ENCODE measurements at regions of chrX and their contacts with region 1.

Region 1: GRCh38 chrX:53317365-53318069 is 36.1 kb upstream of the IQSEC2 start:
- DNase-seq: no peak
- H3K4me3 ChIP-seq: no peak overlapping the region
- CTCF ChIP-seq: peak; percentile 81

Region 2: DNA sequence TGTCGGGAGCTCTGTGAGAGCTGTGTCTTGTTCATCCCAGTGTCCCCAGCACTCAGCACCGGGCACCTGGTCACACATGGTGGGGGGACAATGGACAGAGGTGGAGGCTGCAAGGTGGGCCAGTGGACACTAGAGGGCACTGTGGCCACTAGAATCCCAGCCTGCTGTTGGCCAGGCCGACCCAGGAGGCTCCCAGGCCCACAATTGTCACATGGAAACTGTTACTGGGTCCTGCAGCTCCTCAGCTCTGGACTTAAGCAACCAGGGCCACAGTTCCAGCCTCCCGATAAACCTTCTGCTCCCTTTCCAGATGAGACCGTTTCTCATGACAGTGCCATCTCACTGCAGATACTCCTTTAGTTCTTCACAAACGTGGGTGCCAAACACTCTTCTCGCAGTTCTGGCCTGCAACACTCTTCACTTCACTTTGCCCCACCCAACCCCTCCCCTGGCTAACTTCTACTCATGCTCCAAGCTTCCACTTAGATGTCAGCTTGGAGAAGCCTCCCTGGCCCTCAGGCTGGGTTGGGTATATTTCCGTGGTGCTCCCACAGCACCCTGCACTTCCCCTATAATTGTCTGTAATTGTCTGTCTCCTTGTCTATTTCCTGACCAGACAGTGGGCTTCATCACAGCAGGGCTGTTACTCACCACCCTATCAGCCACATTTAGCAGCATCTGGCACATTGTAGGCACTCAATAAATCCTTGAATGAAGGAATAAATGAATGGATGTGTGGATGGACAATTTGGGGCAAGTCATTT is 32.7 kb before region 1 on chrX:
- CTCF ChIA-PET with region 1: interaction called, 34 read pairs
- POLR2A ChIA-PET with region 1: no interaction called
- DNase-seq: no peak
- H3K4me3 ChIP-seq: no peak overlapping the region
- CTCF ChIP-seq: peak; percentile 79

Region 3: GRCh38 chrX:53305996-53306937 is 11.2 kb before region 1 on chrX:
- CTCF ChIA-PET with region 1: interaction called, 77 read pairs
- POLR2A ChIA-PET with region 1: interaction called, 4 read pairs
- DNase-seq: no peak
- H3K4me3 ChIP-seq: no peak overlapping the region
- CTCF ChIP-seq: no peak

Region 4: GRCh38 chrX:53433651-53434639 is 116.4 kb after region 1 on chrX and contains the start of gene HSD17B10:
- CTCF ChIA-PET with region 1: interaction called, 55 read pairs
- POLR2A ChIA-PET with region 1: no interaction called
- DNase-seq: no peak
- H3K4me3 ChIP-seq: peak within 1 kb of the TSS; percentile 75
- CTCF ChIP-seq: no peak

Region 5: GRCh38 chrX:53481816-53482465 is 164.4 kb after region 1 on chrX:
- CTCF ChIA-PET with region 1: interaction called, 27 read pairs
- POLR2A ChIA-PET with region 1: no interaction called
- DNase-seq: no peak
- H3K4me3 ChIP-seq: no peak overlapping the region
- CTCF ChIP-seq: peak; percentile 62

Measured in AG04449 (cell line).